ENCODE measurements at regions of chr9 and their contacts with region 1.

Region 1: GRCh38 chr9:111631071-111631971 is at the start of gene DNAJC25:
- H3K4me3 ChIP-seq: peak within 1 kb of the TSS; percentile 86
- H3K27ac ChIP-seq: peak within 1 kb of the TSS; percentile 48; the same call in 1 of the 2 replicates
- H3K4me1 ChIP-seq: peaks cover 2% of the 10 kb centered on the region; the same call in 1 of the 2 replicates
- CTCF ChIP-seq: peak; percentile 48; the same call in 1 of the 2 replicates

Region 2: DNA sequence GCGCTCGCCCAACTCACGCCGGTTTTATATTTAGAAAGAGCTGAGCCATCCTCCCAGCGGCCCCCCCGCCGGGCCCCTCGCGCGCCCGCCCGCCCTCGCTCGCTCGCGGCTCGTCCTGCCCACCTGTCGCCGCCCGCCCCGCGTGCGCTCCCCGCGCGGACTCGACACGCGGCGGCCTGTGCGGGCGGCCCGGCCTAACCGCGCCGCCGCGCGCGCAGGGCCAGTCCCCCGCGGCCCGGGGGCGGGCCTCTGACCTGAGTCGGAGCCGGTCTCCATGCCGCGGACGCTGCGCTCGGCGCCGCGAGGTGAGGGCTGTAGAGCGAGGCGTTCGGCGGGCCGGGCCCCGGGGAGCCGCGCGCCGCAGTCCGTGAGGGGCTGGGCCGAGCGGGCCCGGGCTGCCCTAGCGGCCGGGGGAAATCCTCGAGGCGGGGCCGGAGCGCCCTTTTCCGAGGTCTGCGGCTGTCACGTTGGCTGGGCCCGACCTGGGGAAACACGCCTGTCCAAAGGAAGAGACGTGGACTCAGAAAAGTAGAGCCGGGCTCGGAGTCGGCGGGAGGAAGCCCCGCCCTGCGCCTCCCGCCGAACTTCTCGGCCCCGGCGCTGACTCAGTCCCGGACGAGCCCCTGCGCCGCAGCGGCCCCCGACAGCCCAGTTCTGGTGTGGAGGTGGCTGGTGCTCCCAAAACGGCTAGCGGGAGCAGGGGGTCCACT is 147.3 kb before region 1 on chr9 and contains the start of gene ECPAS:
- CTCF ChIA-PET with region 1: no interaction called
- POLR2A ChIA-PET with region 1: interaction called, 12 read pairs
- H3K4me3 ChIP-seq: peak within 1 kb of the TSS; percentile 86
- H3K27ac ChIP-seq: peak within 1 kb of the TSS; percentile 97
- H3K4me1 ChIP-seq: no peaks in the 10 kb centered on the region
- CTCF ChIP-seq: no peak; the same call in 1 of the 2 replicates

Region 3: GRCh38 chr9:111582888-111583287 is 48.4 kb before region 1 on chr9:
- CTCF ChIA-PET with region 1: no interaction called
- POLR2A ChIA-PET with region 1: no interaction called
- H3K4me3 ChIP-seq: no peak overlapping the region
- H3K27ac ChIP-seq: no peak overlapping the region
- H3K4me1 ChIP-seq: no peaks in the 10 kb centered on the region
- CTCF ChIP-seq: no peak

Region 4: DNA sequence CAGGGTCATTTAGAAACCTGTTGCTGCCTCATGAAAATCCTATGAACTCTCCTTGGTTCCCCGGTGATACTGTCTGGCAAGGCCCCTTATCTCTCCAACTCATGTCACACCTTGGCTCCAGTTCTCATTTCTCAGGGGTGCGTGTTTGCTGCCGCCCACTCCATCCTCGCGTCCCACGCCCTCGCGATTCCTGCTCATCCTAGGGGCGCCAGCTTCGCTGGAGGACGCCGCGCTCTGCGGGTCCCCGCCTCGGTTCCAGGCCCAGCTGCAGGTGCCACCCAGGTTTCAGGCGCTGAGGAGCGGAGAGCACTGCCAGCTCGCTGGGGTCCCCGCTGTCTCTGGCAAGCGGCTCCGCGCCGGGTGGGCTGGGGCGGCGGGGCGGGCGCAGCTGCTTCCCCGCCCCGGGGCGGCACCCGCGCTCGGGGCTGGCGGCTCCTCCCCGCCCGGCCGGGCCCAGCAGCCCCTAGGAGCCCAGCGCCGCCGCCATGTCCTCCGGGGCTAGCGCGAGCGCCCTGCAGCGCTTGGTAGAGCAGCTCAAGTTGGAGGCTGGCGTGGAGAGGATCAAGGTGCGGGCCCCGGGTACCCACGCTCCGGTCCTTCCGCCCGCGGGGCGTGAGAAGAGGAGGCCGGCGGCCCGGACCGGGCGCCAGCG is 30.0 kb after region 1 on chr9 and contains the start of gene GNG10:
- CTCF ChIA-PET with region 1: no interaction called
- POLR2A ChIA-PET with region 1: interaction called, 17 read pairs
- H3K4me3 ChIP-seq: peak within 1 kb of the TSS; percentile 78
- H3K27ac ChIP-seq: no peak within 1 kb of the TSS; the same call in 1 of the 2 replicates
- H3K4me1 ChIP-seq: no peaks in the 10 kb centered on the region; the same call in 1 of the 2 replicates
- CTCF ChIP-seq: no peak

Region 5: GRCh38 chr9:111815277-111816070 is 184.2 kb after region 1 on chr9:
- CTCF ChIA-PET with region 1: no interaction called
- POLR2A ChIA-PET with region 1: no interaction called
- H3K4me3 ChIP-seq: no peak overlapping the region
- H3K27ac ChIP-seq: no peak overlapping the region
- H3K4me1 ChIP-seq: no peaks in the 10 kb centered on the region
- CTCF ChIP-seq: no peak

Region 6: GRCh38 chr9:112020680-112021596 is 389.6 kb after region 1 on chr9:
- CTCF ChIA-PET with region 1: no interaction called
- POLR2A ChIA-PET with region 1: no interaction called
- H3K4me3 ChIP-seq: no peak overlapping the region
- H3K27ac ChIP-seq: no peak overlapping the region
- H3K4me1 ChIP-seq: no peaks in the 10 kb centered on the region
- CTCF ChIP-seq: no peak

Measured in HEK293 (cell line).